ENCODE measurements at regions of chr9 and their contacts with region 1.

Region 1: GRCh38 chr9:137188490-137189296 is at the starts of genes ANAPC2 and SSNA1:
- DNase-seq: peak; percentile 92
- H3K4me3 Mint-ChIP-seq: peak within 1 kb of the TSS; percentile 96
- H3K27ac Mint-ChIP-seq: peak within 1 kb of the TSS; percentile 95
- H3K4me1 Mint-ChIP-seq: peaks cover 34% of the 10 kb centered on the region
- H3K27me3 Mint-ChIP-seq: no peaks in the 10 kb centered on the region
- total RNA-seq, gene ANAPC2: 61.3 to 76.1 TPM
- total RNA-seq, gene SSNA1: 74.8 to 81.3 TPM

Region 2: GRCh38 chr9:137200311-137201204 is 11.9 kb after region 1 on chr9 and contains the start of gene TPRN:
- CTCF ChIA-PET with region 1: interaction called, 10 read pairs
- POLR2A ChIA-PET with region 1: interaction called, 5 read pairs
- DNase-seq: peak; percentile 100
- H3K4me3 Mint-ChIP-seq: peak within 1 kb of the TSS; percentile 80
- H3K27ac Mint-ChIP-seq: peak within 1 kb of the TSS; percentile 82
- H3K4me1 Mint-ChIP-seq: peaks cover 30% of the 10 kb centered on the region
- H3K27me3 Mint-ChIP-seq: no peaks in the 10 kb centered on the region
- total RNA-seq, gene TPRN: 8.9 TPM